ENCODE measurements at regions of chr9 and their contacts with region 1.

Region 1: DNA sequence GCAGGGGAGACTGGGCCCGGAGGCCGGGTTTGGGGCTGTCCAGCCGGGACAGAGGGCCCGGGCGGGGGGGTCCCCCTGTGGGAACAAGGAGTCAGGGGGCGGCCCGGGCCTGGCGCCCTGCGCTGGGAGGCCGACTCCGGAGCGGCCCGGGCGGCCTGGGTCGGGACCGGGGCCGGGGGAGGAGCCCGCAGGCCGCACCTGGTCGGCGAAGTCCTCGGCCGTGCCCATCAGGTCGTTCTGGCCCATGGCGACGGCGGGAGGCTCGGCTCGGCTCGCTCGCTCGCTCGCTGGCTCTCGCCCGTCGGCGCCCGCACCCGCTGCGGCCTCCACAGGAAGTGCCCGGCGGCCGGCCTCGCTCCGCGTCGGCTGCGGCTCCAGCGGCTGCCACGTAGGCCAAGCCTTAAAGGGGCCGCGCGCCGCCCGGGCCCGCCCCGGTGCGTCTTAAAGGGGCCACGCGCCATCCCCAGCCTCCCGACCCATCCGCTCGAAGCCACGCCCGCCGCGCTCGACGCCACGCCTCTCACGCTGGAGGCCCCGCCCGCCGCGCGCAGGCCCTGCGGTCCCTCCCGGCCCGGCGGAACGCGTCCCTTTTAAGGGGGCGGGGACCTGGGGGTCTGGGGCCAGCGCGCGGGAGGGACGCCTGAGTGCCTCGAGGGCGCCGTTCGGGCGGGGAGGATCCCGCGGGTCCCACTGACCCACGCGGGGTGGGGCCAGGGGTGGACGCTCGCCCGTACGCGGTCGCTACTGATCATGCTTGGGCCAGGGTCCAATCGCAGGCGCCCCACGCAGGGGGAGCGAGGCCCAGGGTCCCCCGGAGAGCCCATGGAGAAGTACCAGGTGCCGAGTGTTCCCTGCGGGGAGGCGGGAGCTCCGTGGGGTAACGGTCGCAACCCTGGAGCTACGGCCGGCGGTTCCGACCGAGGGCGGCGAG is at the starts of genes STKLD1 and SURF4:
- DNase-seq: peak; percentile 89 to 93 (median 90)
- H3K4me3 ChIP-seq: peak within 1 kb of the TSS; percentile 65 to 95 (median 86)
- H3K4me3 Mint-ChIP-seq: peak within 1 kb of the TSS; percentile 94 to 97
- H3K27ac ChIP-seq: peak within 1 kb of the TSS; percentile 71 to 83
- H3K27ac Mint-ChIP-seq: peak within 1 kb of the TSS; percentile 89 to 96 (median 94)
- H3K4me1 ChIP-seq: peaks cover 21 to 56% of the 10 kb centered on the region in 2 donors
- H3K4me1 Mint-ChIP-seq: peaks cover 54% of the 10 kb centered on the region
- H3K27me3 ChIP-seq: no peaks in the 10 kb centered on the region
- H3K27me3 Mint-ChIP-seq: peaks cover 0 to 5% (median 3%) of the 10 kb centered on the region in 3 donors
- CTCF ChIP-seq: no peak
- polyA plus RNA-seq, gene STKLD1: 0.27 TPM in 1 of 3 donors, not detected in the others
- polyA plus RNA-seq, gene SURF4: 61.4 to 175 (median 157) TPM

Region 2: GRCh38 chr9:133347985-133348717 is 27.8 kb before region 1 on chr9 and contains the starts of genes MED22 and RPL7A:
- intact Hi-C with region 1: loop called in 1 of 2 experiments (anchors 1 kb)
- DNase-seq: peak; percentile 91 to 93 (median 91)
- H3K4me3 ChIP-seq: peak within 1 kb of the TSS; percentile 92 to 100 (median 96)
- H3K4me3 Mint-ChIP-seq: peak within 1 kb of the TSS; percentile 92 to 96
- H3K27ac ChIP-seq: peak within 1 kb of the TSS; percentile 87 to 98
- H3K27ac Mint-ChIP-seq: peak within 1 kb of the TSS; percentile 90 to 96 (median 95)
- H3K4me1 ChIP-seq: peaks cover 22 to 30% of the 10 kb centered on the region in 2 donors
- H3K4me1 Mint-ChIP-seq: peaks cover 30% of the 10 kb centered on the region
- H3K27me3 ChIP-seq: no peaks in the 10 kb centered on the region
- H3K27me3 Mint-ChIP-seq: peaks cover 0 to under 1% (median 0%) of the 10 kb centered on the region in 3 donors
- CTCF ChIP-seq: no peak
- polyA plus RNA-seq, gene MED22: 6.8 to 27.7 (median 9.6) TPM
- polyA plus RNA-seq, gene RPL7A: 390 to 2,322 (median 437) TPM

Region 3: DNA sequence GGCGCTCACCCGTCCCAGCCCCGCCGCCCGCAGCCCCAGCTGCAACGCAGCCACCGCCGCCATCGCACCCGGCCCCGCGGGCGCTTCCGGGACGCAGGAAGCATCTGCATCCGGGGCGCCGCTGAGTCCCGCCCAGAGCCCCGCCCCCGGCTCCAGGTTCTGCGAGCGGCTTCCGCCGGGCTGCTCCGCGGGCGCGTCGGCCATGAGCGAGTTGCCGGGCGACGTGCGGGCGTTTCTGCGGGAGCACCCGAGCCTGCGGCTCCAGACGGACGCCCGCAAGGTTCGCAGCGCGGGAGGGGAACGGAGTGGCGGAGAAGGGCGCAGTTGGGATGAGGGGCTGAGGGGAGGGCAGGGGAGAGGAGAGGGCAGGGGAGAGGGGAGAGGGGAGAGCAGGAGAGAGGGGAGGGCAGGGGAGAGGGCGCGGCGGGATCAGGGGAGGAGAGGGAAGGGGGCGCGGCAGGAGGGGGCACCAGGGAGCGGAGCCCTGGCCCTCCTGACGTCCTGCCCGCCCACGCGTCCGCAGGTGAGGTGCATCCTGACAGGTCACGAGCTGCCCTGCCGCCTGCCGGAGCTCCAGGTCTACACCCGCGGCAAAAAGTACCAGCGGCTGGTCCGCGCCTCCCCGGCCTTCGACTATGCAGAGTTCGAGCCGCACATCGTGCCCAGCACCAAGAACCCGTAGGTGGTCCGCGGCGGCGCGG is 19.4 kb before region 1 on chr9 and contains the starts of genes SURF1 and SURF2:
- intact Hi-C with region 1: loop called in 1 of 2 experiments (anchors 2 kb)
- DNase-seq: peak; percentile 72 to 82 (median 76)
- H3K4me3 ChIP-seq: peak within 1 kb of the TSS; percentile 70 to 89 (median 71)
- H3K4me3 Mint-ChIP-seq: peak within 1 kb of the TSS; percentile 83 to 89
- H3K27ac ChIP-seq: peak within 1 kb of the TSS; percentile 38 to 75
- H3K27ac Mint-ChIP-seq: peak within 1 kb of the TSS; percentile 33 to 91 (median 86)
- H3K4me1 ChIP-seq: peaks cover 29 to 35% of the 10 kb centered on the region in 2 donors
- H3K4me1 Mint-ChIP-seq: peaks cover 42% of the 10 kb centered on the region
- H3K27me3 ChIP-seq: no peaks in the 10 kb centered on the region
- H3K27me3 Mint-ChIP-seq: peaks cover 0 to 2% (median 2%) of the 10 kb centered on the region in 3 donors
- CTCF ChIP-seq: no peak
- polyA plus RNA-seq, gene SURF1: 60.5 to 140 (median 98.4) TPM
- polyA plus RNA-seq, gene SURF2: 17.5 to 24.7 (median 17.6) TPM

Measured in CD14-positive monocyte (primary cell).